ENCODE measurements at regions of chr5 and their contacts with region 1.

Region 1: DNA sequence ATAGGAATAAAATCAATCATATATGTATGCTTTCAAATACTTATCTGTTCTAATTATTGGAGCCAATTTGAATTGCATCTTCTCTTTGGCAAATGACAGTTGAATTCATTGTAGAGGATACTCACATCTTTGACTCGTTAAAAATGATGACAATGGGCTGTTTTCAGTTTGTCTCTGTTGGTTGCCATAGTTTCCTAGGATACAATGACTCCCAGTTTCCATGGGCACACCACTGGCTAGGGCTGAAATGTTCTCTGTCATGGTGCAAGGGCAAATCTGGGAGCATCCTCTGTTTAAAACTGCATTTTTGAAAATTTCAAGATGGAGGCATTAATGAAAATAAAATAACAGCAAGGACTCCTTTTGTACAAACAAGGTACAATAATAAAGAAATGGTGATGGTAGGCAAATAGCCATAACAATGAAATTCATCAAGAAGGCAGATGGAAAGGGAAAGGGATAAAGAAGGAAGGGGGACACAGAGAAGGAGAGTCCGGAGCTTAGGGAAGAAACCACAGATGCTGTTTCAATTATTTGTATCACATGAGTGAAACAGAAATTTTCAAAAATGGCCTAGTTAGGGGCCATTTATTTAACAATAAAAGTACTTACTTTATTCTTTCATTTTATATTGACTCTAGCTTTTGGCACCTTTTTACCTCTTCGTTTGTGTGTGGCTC is 378.8 kb upstream of the SEMA6A start:
- DNase-seq: no peak

Region 2: DNA sequence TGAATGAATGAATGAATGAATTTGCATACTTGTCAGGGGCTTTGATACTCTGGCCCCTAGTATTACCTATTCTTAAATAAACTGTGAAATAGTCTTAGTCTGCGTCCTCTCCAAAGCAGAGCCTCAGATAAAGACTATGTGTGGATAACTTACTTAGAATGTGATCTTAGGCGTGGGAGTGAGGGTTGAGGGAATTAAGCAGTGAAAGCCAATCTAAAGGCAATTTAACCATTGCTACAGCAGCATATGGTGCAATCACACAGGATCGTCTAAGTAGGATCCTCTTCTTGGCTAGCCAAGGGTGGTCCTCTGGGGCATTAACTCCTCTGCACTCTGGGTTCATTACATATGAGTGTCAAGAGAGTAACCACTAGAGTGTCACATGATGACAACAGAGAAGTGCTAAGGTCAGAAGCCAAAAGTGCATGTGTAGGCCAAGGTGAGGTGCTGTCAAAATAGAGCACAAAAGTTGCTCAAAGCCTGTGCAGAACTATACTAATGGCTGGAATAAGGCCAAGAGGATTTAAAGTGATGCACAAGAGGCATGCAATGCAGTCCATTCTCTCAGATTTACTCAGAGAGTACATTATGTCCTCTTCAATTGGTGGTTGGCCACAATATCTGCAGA is 104.3 kb before region 1 on chr5:
- CTCF ChIA-PET with region 1: interaction called, 11 read pairs
- POLR2A ChIA-PET with region 1: no interaction called
- DNase-seq: no peak

Region 3: GRCh38 chr5:116930616-116931015 is 22.8 kb before region 1 on chr5:
- CTCF ChIA-PET with region 1: no interaction called
- POLR2A ChIA-PET with region 1: no interaction called
- DNase-seq: no peak

Region 4: GRCh38 chr5:117013280-117013877 is 60.0 kb after region 1 on chr5:
- CTCF ChIA-PET with region 1: no interaction called
- POLR2A ChIA-PET with region 1: no interaction called
- DNase-seq: no peak

Region 5: DNA sequence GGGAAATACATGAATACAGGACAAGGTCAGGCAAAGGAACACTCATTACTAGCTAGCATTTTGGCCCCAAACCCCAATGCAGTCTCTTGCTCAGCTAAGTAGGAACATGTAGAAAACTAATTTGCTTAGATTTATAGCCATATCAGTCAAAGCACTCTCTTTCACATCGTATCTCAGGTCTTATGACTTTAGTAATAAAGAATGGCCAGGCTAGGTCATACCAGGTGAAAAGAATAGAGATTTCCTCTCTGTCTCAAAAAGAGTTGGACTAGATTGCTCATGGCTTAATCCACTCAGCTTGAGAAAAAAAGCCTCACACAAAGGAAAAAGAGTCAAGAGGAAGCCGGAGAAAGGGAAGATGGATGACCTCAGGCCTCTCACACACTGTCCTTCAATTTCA is 393.9 kb after region 1 on chr5:
- CTCF ChIA-PET with region 1: no interaction called
- POLR2A ChIA-PET with region 1: no interaction called
- DNase-seq: no peak

Measured in HEK293T (cell line).